ENCODE measurements at regions of chr2 and their contacts with region 1.

Region 1: GRCh38 chr2:10911261-10912075 is at the start of gene KCNF1:
- H3K4me3 ChIP-seq: peak within 1 kb of the TSS; percentile 29
- H3K27ac ChIP-seq: no peak within 1 kb of the TSS; the same call in 1 of the 2 replicates
- H3K4me1 ChIP-seq: peaks cover 2% of the 10 kb centered on the region; the same call in 1 of the 2 replicates
- CTCF ChIP-seq: peak; percentile 67; the same call in 1 of the 2 replicates

Region 2: GRCh38 chr2:10900216-10901109 is 11.0 kb before region 1 on chr2:
- CTCF ChIA-PET with region 1: interaction called, 14 read pairs
- POLR2A ChIA-PET with region 1: no interaction called
- H3K4me3 ChIP-seq: no peak overlapping the region
- H3K27ac ChIP-seq: no peak overlapping the region
- H3K4me1 ChIP-seq: no peaks in the 10 kb centered on the region
- CTCF ChIP-seq: no peak

Region 3: GRCh38 chr2:10930721-10931516 is 19.5 kb after region 1 on chr2:
- CTCF ChIA-PET with region 1: interaction called, 28 read pairs
- POLR2A ChIA-PET with region 1: no interaction called
- H3K4me3 ChIP-seq: no peak overlapping the region
- H3K27ac ChIP-seq: no peak overlapping the region
- H3K4me1 ChIP-seq: peaks cover under 1% of the 10 kb centered on the region
- CTCF ChIP-seq: no peak

Measured in HEK293 (cell line).